Mammary epithelial cell (primary cell): ENCODE measurements at regions of chr16 and their contacts with region 1.

Region 1: GRCh38 chr16:87062569-87063442 is 254.4 kb downstream of the C16orf95 start:
- DNase-seq: peak; percentile 28
- H3K4me3 ChIP-seq: peak overlapping the region in 1 of 3 experiments; percentile 29
- H3K27ac ChIP-seq: no peak overlapping the region
- H3K4me1 ChIP-seq: no peaks in the 10 kb centered on the region
- H3K27me3 ChIP-seq: no peaks in the 10 kb centered on the region
- CTCF ChIP-seq: peak; percentile 70 to 86

Region 2: DNA sequence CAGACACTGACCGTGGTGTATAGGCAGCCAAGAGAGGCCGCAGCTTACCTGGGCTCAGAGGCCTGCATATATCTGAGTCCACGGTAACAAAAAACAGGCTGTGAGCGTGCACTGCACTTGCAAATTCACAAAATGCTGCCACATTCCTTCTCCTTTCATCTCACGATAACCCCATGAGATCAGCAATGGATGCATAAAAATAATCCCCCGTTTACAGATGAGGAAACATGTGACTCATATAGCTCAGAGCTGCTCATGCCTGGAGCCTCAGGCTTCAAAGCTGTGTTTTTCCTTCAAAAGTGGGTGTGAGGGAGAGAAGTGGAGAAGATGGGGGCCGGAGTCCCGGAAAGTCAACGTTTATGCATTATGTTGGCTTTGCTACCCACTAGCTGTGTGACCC is 670.8 kb before region 1 on chr16:
- CTCF ChIA-PET with region 1: interaction called, 12 read pairs
- dilution Hi-C with region 1: no loop called
- in situ Hi-C with region 1: no loop called
- intact Hi-C with region 1: no loop called
- DNase-seq: peak; percentile 30
- H3K4me3 ChIP-seq: no peak overlapping the region
- H3K27ac ChIP-seq: no peak overlapping the region
- H3K4me1 ChIP-seq: peaks cover 4% of the 10 kb centered on the region
- H3K27me3 ChIP-seq: no peaks in the 10 kb centered on the region
- CTCF ChIP-seq: no peak

Region 3: DNA sequence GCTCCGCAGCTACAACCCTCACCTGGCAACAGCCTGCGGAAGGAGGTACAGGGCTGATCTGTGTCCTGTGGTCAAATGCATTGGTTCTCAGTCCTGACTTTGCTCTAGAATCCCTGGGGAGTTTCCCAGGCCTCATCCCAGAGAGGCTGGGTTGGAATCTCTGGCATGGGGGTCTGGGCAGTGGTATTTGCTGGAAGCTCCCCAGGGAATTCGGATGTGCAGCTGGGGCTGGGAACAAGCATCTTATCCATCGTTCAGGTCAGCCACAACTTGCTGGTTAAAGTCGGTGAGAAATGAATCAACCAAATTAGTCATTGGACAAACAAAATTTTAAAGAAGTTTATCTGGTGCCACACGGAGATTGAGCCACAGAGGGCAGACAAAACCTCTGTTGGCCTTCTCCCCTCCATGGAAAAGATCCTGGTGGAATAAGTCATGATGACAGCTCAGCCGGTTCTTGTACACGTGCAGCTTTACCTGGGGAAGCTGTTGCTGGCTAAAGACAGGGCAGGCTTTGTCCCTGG is 253.3 kb before region 1 on chr16:
- CTCF ChIA-PET with region 1: no interaction called
- dilution Hi-C with region 1: no loop called
- in situ Hi-C with region 1: no loop called
- intact Hi-C with region 1: loop called (anchors 1 kb)
- DNase-seq: peak; percentile 92
- H3K4me3 ChIP-seq: no peak overlapping the region
- H3K27ac ChIP-seq: no peak overlapping the region
- H3K4me1 ChIP-seq: peaks cover 25% of the 10 kb centered on the region
- H3K27me3 ChIP-seq: peaks cover 2% of the 10 kb centered on the region
- CTCF ChIP-seq: peak; percentile 23 to 49

Region 4: DNA sequence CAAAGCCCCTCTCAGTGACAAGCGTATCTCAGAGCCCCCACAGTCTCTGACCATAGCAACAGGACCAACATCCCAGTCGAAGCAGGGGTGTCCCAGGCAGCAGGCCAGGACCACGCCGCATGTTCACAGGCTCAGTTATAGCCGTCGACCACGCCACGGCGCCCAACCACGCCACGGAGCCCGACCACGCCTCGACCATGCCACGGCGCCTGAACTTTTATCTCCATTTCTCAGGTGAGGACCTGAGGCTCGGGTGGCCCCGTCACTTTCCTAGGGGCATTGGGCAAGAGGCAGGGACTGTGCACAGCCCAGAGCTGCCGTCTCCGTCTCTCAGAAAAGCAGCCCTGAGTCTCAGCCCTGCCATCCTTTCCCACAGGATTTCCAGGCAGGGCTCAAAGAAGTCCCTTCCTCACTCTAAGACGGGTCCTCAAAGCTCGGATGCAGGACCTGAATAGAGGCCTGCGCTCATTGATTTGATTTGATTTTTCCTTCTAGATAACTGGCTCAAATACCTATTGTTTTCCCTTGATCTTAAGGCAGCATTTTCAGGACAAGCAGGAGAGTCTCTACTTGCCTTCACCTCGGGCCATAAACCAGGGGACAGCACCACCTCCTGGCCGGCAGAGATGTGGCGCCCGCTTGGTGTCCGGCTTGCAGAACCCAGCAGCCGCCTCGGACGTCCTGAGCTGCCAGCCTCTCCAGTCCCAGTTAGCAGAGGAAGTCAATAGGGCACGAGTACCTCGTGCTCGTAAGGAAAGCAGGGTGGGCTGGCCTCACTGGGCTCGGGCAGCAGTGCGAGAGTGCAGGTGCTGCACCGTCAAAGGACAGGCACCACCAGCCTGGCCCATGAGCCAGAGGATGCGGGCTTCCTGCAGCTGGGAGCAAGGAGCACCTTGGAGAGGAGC is 215.6 kb after region 1 on chr16:
- CTCF ChIA-PET with region 1: interaction called, 3 read pairs
- dilution Hi-C with region 1: no loop called
- in situ Hi-C with region 1: no loop called
- intact Hi-C with region 1: loop called (anchors 2 kb)
- DNase-seq: peak; percentile 58
- H3K4me3 ChIP-seq: no peak overlapping the region
- H3K27ac ChIP-seq: no peak overlapping the region
- H3K4me1 ChIP-seq: no peaks in the 10 kb centered on the region
- H3K27me3 ChIP-seq: no peaks in the 10 kb centered on the region
- CTCF ChIP-seq: peak; percentile 85 to 93